Activated CD4-positive, alpha-beta memory T cell treated with anti-CD3 and anti-CD28 coated beads for 36 hours (primary cell): ENCODE measurements at regions of chr4 and their contacts with region 1.

Region 1: GRCh38 chr4:102598086-102598761 is 97.1 kb downstream of the NFKB1 start:
- DNase-seq: no peak
- H3K4me3 Mint-ChIP-seq: peak overlapping the region; percentile 20
- H3K27ac Mint-ChIP-seq: peak overlapping the region; percentile 89
- H3K4me1 Mint-ChIP-seq: peaks cover 68% of the 10 kb centered on the region
- H3K27me3 Mint-ChIP-seq: no peaks in the 10 kb centered on the region

Region 2: GRCh38 chr4:102328045-102328444 is 270.2 kb before region 1 on chr4:
- CTCF ChIA-PET with region 1: no interaction called
- POLR2A ChIA-PET with region 1: no interaction called
- intact Hi-C with region 1: no loop called
- DNase-seq: no peak
- H3K4me3 Mint-ChIP-seq: no peak overlapping the region
- H3K27ac Mint-ChIP-seq: no peak overlapping the region
- H3K4me1 Mint-ChIP-seq: peaks cover 40% of the 10 kb centered on the region
- H3K27me3 Mint-ChIP-seq: no peaks in the 10 kb centered on the region

Region 3: GRCh38 chr4:102554482-102554881 is 43.7 kb before region 1 on chr4:
- CTCF ChIA-PET with region 1: no interaction called
- POLR2A ChIA-PET with region 1: no interaction called
- intact Hi-C with region 1: loop called (anchors 1 kb)
- DNase-seq: no peak
- H3K4me3 Mint-ChIP-seq: no peak overlapping the region
- H3K27ac Mint-ChIP-seq: no peak overlapping the region
- H3K4me1 Mint-ChIP-seq: peaks cover 64% of the 10 kb centered on the region
- H3K27me3 Mint-ChIP-seq: no peaks in the 10 kb centered on the region

Region 4: DNA sequence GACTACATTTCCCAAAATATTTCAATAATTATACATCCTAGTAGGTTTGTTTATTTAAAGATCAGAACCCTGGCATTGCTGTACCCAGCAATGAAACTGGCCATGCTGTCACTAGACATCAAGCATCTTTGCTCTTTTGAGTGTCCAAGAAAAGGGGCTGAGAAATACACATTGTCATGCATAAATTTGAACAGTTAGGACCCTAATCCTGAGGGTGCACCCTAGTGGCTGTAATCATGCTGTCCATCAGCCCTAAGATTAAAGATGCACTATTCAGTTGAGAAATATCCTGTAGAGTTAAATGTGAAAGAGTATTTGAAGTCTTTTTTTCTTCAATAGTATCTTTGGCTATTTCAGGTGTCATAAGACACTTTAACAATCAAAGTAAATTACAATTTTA is 11.8 kb after region 1 on chr4:
- CTCF ChIA-PET with region 1: interaction called, 4 read pairs
- POLR2A ChIA-PET with region 1: interaction called, 3 read pairs
- intact Hi-C with region 1: loop called (anchors 1 kb)
- DNase-seq: no peak
- H3K4me3 Mint-ChIP-seq: no peak overlapping the region
- H3K27ac Mint-ChIP-seq: peak overlapping the region; percentile 31
- H3K4me1 Mint-ChIP-seq: peaks cover 86% of the 10 kb centered on the region
- H3K27me3 Mint-ChIP-seq: no peaks in the 10 kb centered on the region

Region 5: GRCh38 chr4:102687373-102687981 is 89.3 kb after region 1 on chr4:
- CTCF ChIA-PET with region 1: no interaction called
- POLR2A ChIA-PET with region 1: no interaction called
- intact Hi-C with region 1: no loop called
- DNase-seq: no peak
- H3K4me3 Mint-ChIP-seq: no peak overlapping the region
- H3K27ac Mint-ChIP-seq: no peak overlapping the region
- H3K4me1 Mint-ChIP-seq: no peaks in the 10 kb centered on the region
- H3K27me3 Mint-ChIP-seq: no peaks in the 10 kb centered on the region